Caco-2 (cell line): ENCODE measurements at regions of chr5 and their contacts with region 1.

Region 1: DNA sequence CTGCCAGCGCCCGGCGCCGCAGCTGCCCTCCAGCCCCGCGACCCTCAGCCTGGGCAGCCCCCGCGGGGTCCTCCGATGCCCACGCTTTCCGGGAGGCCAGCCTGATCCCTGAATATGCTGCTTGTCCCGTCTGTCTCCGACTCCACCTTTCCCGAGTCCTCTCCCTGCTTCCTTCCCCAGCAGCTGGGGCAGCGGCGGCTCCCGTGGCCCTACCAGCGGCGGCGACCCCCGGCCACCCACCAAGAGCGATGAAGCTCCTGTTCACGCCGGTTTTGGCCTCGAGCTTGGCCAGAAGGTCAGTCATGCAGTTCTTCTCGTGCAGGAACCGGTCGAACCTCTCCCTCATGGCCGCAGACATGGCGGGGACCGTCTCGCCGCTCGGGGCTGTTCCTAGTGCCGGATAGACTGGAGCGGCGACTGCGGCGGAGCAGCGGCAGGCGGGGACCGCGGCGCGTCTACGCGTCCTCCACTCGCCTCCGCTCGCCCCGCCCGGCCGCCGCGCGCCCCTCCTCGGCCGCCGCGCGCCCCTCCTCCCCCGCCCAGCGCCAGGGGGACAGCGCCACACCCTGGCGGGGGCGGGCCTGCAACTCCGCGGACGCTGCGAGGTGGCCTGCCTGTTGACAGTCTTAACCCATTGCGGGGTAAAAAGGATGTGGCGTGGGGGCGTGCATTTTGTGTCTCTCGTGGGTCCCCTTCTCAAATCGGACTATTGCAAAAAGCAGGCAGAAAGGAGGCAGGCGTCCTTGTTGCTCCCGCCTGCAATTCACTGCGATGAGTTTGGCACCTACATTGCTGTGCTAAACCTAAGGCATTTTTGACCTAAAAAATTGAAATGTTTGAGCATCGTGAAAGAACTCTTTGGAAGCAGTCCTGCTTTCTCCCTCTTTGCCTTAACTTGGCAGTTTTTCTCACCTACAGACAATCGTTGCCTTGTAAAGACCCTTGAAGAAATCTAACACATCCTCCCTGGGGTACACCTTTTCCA is at the start of gene REEP5:
- DNase-seq: peak; percentile 89 to 92
- H3K4me3 ChIP-seq: peak within 1 kb of the TSS; percentile 99
- H3K4me3 Mint-ChIP-seq: peak within 1 kb of the TSS; percentile 100
- H3K27ac Mint-ChIP-seq: peak within 1 kb of the TSS; percentile 99
- H3K4me1 ChIP-seq: peaks cover 10% of the 10 kb centered on the region
- H3K4me1 Mint-ChIP-seq: peaks cover 25% of the 10 kb centered on the region
- H3K27me3 ChIP-seq: no peaks in the 10 kb centered on the region
- H3K27me3 Mint-ChIP-seq: no peaks in the 10 kb centered on the region
- CTCF ChIP-seq: peak; percentile 72 to 81
- total RNA-seq, gene REEP5: 88.2 and 99.3 TPM in 2 replicates

Region 2: GRCh38 chr5:112293587-112293986 is 628.5 kb before region 1 on chr5:
- CTCF ChIA-PET with region 1: no interaction called
- POLR2A ChIA-PET with region 1: no interaction called
- intact Hi-C with region 1: no loop called
- DNase-seq: no peak
- H3K4me3 ChIP-seq: no peak overlapping the region
- H3K4me3 Mint-ChIP-seq: no peak overlapping the region
- H3K27ac Mint-ChIP-seq: no peak overlapping the region
- H3K4me1 ChIP-seq: no peaks in the 10 kb centered on the region
- H3K4me1 Mint-ChIP-seq: no peaks in the 10 kb centered on the region
- H3K27me3 ChIP-seq: no peaks in the 10 kb centered on the region
- H3K27me3 Mint-ChIP-seq: peaks cover 15% of the 10 kb centered on the region
- CTCF ChIP-seq: no peak

Region 3: DNA sequence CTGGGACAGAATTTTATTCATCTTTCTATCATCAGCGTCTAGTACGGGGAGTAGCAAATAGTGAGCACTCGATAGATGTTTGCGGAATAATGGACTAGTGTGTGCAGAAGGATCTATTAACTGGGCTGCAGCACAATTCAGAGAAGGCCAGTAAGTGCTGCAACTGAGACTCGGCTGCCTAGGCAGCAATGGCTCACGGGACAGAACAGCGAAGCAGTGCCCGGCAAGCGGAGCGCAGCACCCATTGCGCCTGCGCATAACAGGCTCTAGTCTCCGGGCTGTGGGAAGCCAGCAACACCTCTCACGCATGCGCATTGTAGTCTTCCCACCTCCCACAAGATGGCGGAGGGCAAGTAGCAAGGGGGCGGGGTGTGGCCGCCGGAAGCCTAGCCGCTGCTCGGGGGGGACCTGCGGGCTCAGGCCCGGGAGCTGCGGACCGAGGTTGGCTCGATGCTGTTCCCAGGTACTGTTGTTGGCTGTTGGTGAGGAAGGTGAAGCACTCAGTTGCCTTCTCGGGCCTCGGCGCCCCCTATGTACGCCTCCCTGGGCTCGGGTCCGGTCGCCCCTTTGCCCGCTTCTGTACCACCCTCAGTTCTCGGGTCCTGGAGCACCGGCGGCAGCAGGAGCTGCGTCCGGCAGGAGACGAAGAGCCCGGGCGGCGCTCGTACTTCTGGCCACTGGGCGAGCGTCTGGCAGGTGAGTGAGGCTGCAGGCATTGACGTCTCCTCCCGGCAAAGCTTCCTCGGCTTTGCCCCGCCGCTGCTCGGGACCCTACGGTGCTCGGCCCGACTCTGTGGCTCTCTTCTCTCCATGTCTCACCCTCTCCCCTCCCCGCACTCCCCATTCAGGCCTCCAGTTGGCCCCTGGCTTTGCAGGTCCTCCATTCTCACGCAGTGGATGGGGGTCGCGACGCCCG is 214.7 kb before region 1 on chr5:
- CTCF ChIA-PET with region 1: no interaction called
- POLR2A ChIA-PET with region 1: no interaction called
- intact Hi-C with region 1: loop called (anchors 10 kb)
- DNase-seq: peak; percentile 98 to 99
- H3K4me3 ChIP-seq: peak overlapping the region; percentile 81
- H3K4me3 Mint-ChIP-seq: peak overlapping the region; percentile 99
- H3K27ac Mint-ChIP-seq: peak overlapping the region; percentile 79
- H3K4me1 ChIP-seq: peaks cover 20% of the 10 kb centered on the region
- H3K4me1 Mint-ChIP-seq: peaks cover 33% of the 10 kb centered on the region
- H3K27me3 ChIP-seq: no peaks in the 10 kb centered on the region
- H3K27me3 Mint-ChIP-seq: peaks cover 3% of the 10 kb centered on the region
- CTCF ChIP-seq: peak in 1 of 2 experiments; percentile 8

Region 4: DNA sequence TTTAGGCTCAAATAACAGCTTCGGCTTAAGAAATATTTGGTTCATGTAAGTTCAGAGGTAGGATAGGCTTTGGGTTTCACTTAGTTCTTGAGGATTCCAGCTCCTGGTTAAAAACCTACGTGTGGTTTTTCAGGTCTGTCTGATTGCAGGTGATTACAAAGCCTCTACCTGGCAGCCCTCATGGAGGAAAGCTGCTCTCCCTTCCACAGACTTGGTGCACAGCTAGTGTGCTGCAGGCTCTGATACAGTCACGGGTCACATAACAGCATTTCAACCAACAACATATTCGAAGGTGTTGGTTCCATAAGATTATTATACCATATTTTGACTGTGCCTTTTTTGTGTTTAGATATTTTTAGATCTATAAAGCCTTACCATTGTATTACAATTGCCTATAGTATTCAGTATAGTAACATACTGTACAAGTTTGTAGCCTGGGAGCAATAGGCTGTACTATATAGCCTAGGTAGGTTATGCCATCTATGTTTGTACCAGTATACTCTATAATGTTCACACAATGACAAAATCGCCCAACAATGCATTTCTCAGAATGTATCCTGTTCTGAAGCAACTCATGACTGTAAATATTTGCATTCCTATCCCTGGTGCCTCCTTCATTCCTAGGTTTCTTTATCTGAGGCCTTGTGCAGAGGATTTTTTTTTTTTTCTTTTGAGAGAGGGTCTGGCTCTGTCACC is 46.4 kb after region 1 on chr5:
- CTCF ChIA-PET with region 1: interaction called, 10 read pairs
- POLR2A ChIA-PET with region 1: interaction called, 14 read pairs
- intact Hi-C with region 1: loop called (anchors 1 kb)
- DNase-seq: peak; percentile 58 to 77
- H3K4me3 ChIP-seq: no peak overlapping the region
- H3K4me3 Mint-ChIP-seq: peak overlapping the region; percentile 65
- H3K27ac Mint-ChIP-seq: peak overlapping the region; percentile 94
- H3K4me1 ChIP-seq: peaks cover 56% of the 10 kb centered on the region
- H3K4me1 Mint-ChIP-seq: peaks cover 35% of the 10 kb centered on the region
- H3K27me3 ChIP-seq: no peaks in the 10 kb centered on the region
- H3K27me3 Mint-ChIP-seq: no peaks in the 10 kb centered on the region
- CTCF ChIP-seq: no peak

Region 5: GRCh38 chr5:112976432-112977309 is 54.5 kb after region 1 on chr5 and contains the start of gene DCP2:
- CTCF ChIA-PET with region 1: interaction called, 5 read pairs
- POLR2A ChIA-PET with region 1: interaction called, 13 read pairs
- intact Hi-C with region 1: loop called (anchors 1 kb)
- DNase-seq: peak; percentile 97
- H3K4me3 ChIP-seq: peak within 1 kb of the TSS; percentile 84
- H3K4me3 Mint-ChIP-seq: peak within 1 kb of the TSS; percentile 98
- H3K27ac Mint-ChIP-seq: peak within 1 kb of the TSS; percentile 97
- H3K4me1 ChIP-seq: peaks cover 40% of the 10 kb centered on the region
- H3K4me1 Mint-ChIP-seq: peaks cover 28% of the 10 kb centered on the region
- H3K27me3 ChIP-seq: no peaks in the 10 kb centered on the region
- H3K27me3 Mint-ChIP-seq: no peaks in the 10 kb centered on the region
- CTCF ChIP-seq: no peak
- total RNA-seq, gene DCP2: 146 and 149 TPM in 2 replicates